Aorta (tissue), 5 donors: ENCODE measurements at regions of chr2 and their contacts with region 1.

Region 1: DNA sequence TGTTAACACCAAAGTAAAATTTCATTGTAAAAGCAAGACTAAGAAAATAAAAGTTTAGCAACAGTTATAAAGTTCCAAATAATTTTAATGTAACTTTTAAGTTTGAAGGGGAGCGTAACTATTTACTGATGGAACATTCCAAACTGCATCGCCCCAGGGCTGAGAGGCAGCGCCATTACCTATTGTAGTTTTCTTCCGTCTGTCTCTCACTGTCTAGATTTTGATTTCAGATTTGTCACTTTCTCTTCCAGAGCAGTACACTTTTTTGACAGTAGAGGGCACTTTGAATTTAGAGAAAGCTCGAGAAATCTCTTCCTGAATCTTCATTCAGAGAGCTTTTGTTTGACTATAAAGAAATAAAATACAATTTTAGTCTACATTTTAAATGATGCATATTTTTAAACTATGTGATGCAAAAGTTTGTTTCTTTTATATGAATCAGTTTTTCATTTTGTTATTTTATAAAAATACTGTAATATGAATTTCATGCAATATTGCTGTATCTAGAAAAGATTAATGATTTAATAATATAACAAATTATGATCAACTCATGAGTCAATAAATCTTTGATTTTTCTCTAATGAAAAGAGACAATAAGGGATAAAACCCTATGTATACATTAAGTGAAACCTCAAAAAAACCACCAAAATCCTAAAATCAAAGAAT is 389.8 kb downstream of the FIGN start:
- DNase-seq: no peak
- ATAC-seq: peak; percentile 47
- H3K4me3 ChIP-seq: no peak overlapping the region
- H3K27ac ChIP-seq: no peak overlapping the region
- H3K4me1 ChIP-seq: peaks cover 0 to 3% of the 10 kb centered on the region in 2 donors
- H3K27me3 ChIP-seq: no peaks in the 10 kb centered on the region

Region 2: GRCh38 chr2:163735685-163736432 is 389.8 kb after region 1 on chr2 and contains the start of gene FIGN:
- intact Hi-C with region 1: loop called (anchors 5 to 10 kb)
- DNase-seq: peak; percentile 83 to 93
- ATAC-seq: peak; percentile 89
- H3K4me3 ChIP-seq: peak within 1 kb of the TSS; percentile 96 to 100
- H3K27ac ChIP-seq: peak within 1 kb of the TSS; percentile 74 to 92
- H3K4me1 ChIP-seq: no peaks in the 10 kb centered on the region
- H3K27me3 ChIP-seq: no peaks in the 10 kb centered on the region
- total RNA-seq, gene FIGN: 12.7 to 27.8 TPM

Region 3: GRCh38 chr2:164061129-164061746 is 715.2 kb after region 1 on chr2:
- intact Hi-C with region 1: loop called (anchors 5 to 10 kb)
- DNase-seq: no peak
- ATAC-seq: peak; percentile 64
- H3K4me3 ChIP-seq: no peak overlapping the region
- H3K27ac ChIP-seq: no peak overlapping the region
- H3K4me1 ChIP-seq: peaks cover 0 to 2% of the 10 kb centered on the region in 2 donors
- H3K27me3 ChIP-seq: no peaks in the 10 kb centered on the region

Region 4: DNA sequence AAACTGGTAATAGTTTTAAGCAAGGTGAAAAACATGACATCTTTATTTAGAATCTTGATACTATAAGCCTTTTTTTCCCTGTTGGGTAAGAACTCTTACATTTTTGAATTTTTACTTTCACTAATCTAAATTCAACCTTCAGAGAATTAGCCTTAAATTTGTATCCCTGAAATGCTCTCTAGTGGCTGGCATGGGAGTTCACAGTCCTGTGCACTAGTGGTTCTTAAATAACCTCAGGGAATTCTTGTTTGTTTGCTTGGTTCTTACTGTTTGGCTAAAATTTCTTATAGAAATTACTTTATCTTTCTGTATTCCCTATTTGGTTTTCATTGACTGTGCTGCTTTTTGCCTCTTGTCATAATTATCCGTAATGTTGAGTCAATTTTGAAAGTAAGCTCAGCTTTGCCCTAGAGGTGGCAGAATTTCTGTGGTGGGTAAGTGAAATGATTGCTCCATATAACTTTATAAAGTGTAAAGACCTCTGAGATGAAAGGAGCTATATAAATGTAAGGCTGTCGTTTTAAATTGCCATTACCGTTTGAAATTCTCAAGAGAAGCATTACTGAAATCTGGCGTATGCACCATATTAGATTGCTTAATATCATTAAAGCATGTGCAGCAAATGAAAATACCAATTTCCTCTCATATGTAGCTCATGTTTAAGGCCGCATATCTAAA is 781.1 kb after region 1 on chr2:
- intact Hi-C with region 1: loop called (anchors 5 to 10 kb)
- DNase-seq: no peak
- ATAC-seq: peak; percentile 44
- H3K4me3 ChIP-seq: no peak overlapping the region
- H3K27ac ChIP-seq: no peak overlapping the region
- H3K4me1 ChIP-seq: peaks cover 0 to 6% of the 10 kb centered on the region in 2 donors
- H3K27me3 ChIP-seq: no peaks in the 10 kb centered on the region

Region 5: GRCh38 chr2:164420786-164421185 is 1074.7 kb after region 1 on chr2:
- intact Hi-C with region 1: loop called in 1 of 2 experiments (anchors 10 kb)
- DNase-seq: no peak
- ATAC-seq: no peak
- H3K4me3 ChIP-seq: no peak overlapping the region
- H3K27ac ChIP-seq: no peak overlapping the region
- H3K4me1 ChIP-seq: no peaks in the 10 kb centered on the region
- H3K27me3 ChIP-seq: no peaks in the 10 kb centered on the region

Region 6: DNA sequence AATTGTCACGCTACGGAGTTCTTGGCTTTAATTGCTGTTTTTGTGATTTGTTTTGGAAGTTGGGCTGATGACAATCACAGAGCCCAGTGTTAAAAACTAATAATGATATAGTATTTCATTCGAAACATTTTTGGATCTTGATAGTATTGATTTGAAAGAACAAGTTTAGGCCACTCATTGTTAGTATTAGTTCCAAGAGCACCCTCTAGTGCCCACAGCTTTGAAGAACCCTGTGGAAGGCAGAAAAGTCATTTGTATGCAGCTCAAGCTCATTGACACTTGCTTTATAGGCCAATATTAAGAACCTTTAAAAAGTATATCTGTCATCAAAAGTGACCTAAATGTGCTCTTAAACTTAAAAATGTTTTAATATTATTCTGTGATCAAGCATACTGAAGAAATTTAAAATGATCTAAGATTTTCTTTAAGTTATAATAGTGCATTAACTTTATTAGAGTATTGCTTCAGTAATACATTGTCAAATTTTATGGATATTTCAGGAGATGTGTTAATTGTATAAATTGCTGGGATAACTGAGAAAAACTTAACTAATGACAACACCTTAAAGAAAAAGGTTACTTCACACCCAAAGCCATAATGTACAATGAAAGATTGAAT is 1084.2 kb after region 1 on chr2:
- intact Hi-C with region 1: loop called (anchors 5 to 10 kb)
- DNase-seq: no peak
- ATAC-seq: no peak
- H3K4me3 ChIP-seq: no peak overlapping the region
- H3K27ac ChIP-seq: no peak overlapping the region
- H3K4me1 ChIP-seq: no peaks in the 10 kb centered on the region
- H3K27me3 ChIP-seq: no peaks in the 10 kb centered on the region